ENCODE measurements at regions of chr11 and their contacts with region 1.

Region 1: GRCh38 chr11:117143871-117144476 is at the start of gene PAFAH1B2:
- DNase-seq: peak; percentile 76 to 97
- H3K4me3 ChIP-seq: peak within 1 kb of the TSS; percentile 88 to 99 (median 92)
- H3K27ac ChIP-seq: peak within 1 kb of the TSS; percentile 92
- H3K4me1 ChIP-seq: peaks cover 0 to 11% (median 6%) of the 10 kb centered on the region in 4 experiments; a peak in 5 of 7 replicates
- H3K27me3 ChIP-seq: no peaks in the 10 kb centered on the region
- CTCF ChIP-seq: no peak
- EP300 ChIP-seq: no peak
- POLR2A ChIP-seq: peak in 1 of 2 experiments; percentile 82; a peak in 1 of 3 replicates
- RAD21 ChIP-seq: no peak
- total RNA-seq, gene PAFAH1B2: 151 and 161 TPM in 2 replicates

Region 2: GRCh38 chr11:117098269-117099232 is 45.4 kb before region 1 on chr11 and contains the start of gene SIK3:
- CTCF ChIA-PET with region 1: no interaction called
- POLR2A ChIA-PET with region 1: interaction called, 13 read pairs
- DNase-seq: peak; percentile 43 to 90
- H3K4me3 ChIP-seq: peak within 1 kb of the TSS; percentile 82 to 95 (median 90)
- H3K27ac ChIP-seq: peak within 1 kb of the TSS; percentile 94
- H3K4me1 ChIP-seq: peaks cover 5 to 15% (median 10%) of the 10 kb centered on the region in 4 experiments; a peak in 6 of 7 replicates
- H3K27me3 ChIP-seq: no peaks in the 10 kb centered on the region
- CTCF ChIP-seq: no peak
- EP300 ChIP-seq: 0 out of 3 replicates have a peak, but pooled peaks of 1 of the 2 experiments have one; percentile 39
- POLR2A ChIP-seq: peak in 1 of 2 experiments; percentile 61; a peak in 2 of 3 replicates
- RAD21 ChIP-seq: no peak; a peak in 1 of 4 replicates
- total RNA-seq, gene SIK3: 32.1 and 32.6 TPM in 2 replicates

Region 3: DNA sequence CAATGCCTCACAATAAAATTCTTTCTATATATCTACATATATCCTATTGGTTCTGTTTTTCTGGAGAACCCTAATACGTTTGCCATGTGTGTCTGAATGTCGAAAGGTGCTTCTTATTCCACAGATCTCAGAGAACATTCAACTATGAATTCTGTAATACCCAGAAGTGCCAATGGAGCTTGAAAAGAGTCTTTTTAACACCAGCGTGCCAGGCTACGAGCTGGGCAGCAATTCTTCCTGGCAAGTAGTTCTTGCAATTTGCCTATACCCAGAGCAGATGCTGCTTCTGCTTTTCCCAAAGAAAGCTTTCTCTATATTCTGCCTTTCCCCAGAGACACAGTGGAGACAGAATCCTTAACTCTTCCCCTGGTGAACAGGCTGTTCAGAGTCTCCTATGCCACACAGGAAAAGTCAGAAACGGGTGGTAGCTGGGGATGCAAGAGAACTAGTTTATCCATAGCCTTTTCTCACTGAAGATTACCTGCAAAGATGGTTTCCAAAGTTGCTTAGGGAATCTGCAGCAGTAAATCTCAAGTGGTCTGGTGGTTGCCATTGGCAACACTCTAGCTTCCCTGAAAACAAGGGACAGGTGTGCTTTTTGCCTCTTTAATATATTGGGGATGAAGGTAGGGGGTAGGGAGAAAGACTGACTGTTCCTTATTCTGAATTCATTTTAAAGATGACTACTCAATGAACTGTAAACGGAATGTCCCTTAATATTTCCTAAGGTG is 16.6 kb before region 1 on chr11:
- CTCF ChIA-PET with region 1: interaction called, 12 read pairs
- POLR2A ChIA-PET with region 1: interaction called, 7 read pairs
- DNase-seq: no peak
- H3K4me3 ChIP-seq: no peak overlapping the region
- H3K27ac ChIP-seq: no peak overlapping the region
- H3K4me1 ChIP-seq: no peaks in the 10 kb centered on the region
- H3K27me3 ChIP-seq: no peaks in the 10 kb centered on the region
- CTCF ChIP-seq: no peak
- EP300 ChIP-seq: no peak
- POLR2A ChIP-seq: no peak
- RAD21 ChIP-seq: no peak

Region 4: DNA sequence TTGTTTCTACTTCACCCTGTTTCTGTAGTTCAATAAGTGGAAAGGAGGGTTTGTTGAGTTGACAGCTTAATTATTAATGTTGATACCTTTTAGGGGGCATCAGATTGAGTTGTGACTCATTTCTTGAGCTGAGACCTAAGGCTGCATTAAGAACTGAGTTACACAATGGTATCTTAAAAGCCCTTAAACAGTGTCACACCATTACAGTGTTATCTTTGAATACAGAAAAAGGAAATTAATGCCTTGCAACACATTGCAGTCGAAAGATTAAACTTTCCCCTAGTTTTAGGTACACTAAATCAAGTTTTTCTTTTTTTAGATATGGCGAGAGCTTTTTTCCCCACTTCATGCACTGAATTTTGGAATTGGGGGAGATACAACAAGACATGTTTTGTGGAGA is 16.9 kb after region 1 on chr11:
- CTCF ChIA-PET with region 1: interaction called, 8 read pairs
- POLR2A ChIA-PET with region 1: interaction called, 30 read pairs
- DNase-seq: no peak
- H3K4me3 ChIP-seq: no peak overlapping the region
- H3K27ac ChIP-seq: no peak overlapping the region
- H3K4me1 ChIP-seq: no peaks in the 10 kb centered on the region
- H3K27me3 ChIP-seq: no peaks in the 10 kb centered on the region
- CTCF ChIP-seq: no peak
- EP300 ChIP-seq: no peak
- POLR2A ChIP-seq: no peak
- RAD21 ChIP-seq: no peak

Region 5: DNA sequence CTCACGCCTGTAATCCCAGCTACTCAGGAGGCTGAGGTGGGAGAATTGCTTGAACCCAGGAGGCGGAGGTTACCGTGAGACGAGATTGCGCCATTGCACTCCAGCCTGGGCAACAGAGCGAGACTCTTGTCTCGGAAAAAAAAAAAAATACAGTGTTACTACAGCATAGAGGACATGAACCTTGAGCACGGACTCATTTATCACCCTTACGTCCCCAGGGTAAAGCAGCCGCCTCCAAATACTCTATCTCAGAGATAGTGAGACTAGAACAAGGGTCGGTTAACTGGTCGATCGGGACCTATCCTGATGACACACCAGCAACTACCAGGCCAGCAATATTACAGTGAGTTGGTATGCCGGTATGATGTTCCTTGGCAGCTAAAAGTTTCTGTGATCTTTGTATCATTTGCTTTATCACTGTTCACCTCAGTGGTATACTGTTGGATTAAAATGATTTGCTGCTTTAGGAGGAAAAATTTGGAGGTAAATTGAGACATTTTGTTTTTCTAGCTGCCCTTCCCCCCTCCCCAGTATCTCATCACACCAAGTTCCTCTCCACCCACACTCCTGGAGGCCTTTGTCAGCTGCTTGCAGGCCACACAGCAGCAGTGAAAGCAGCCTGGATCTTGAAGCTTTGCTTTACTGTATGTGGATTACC is 27.6 kb after region 1 on chr11:
- CTCF ChIA-PET with region 1: interaction called, 11 read pairs
- POLR2A ChIA-PET with region 1: interaction called, 29 read pairs
- DNase-seq: no peak
- H3K4me3 ChIP-seq: no peak overlapping the region
- H3K27ac ChIP-seq: no peak overlapping the region
- H3K4me1 ChIP-seq: no peaks in the 10 kb centered on the region
- H3K27me3 ChIP-seq: no peaks in the 10 kb centered on the region
- CTCF ChIP-seq: no peak
- EP300 ChIP-seq: no peak
- POLR2A ChIP-seq: peak in 1 of 2 experiments; percentile 36; a peak in 1 of 3 replicates
- RAD21 ChIP-seq: no peak